H1 (cell line): ENCODE measurements at regions of chr10 and their contacts with region 1.

Region 1: GRCh38 chr10:11881477-11882417 is 58.6 kb downstream of the PROSER2 start:
- DNase-seq: peak in 1 of 2 experiments; percentile 65
- H3K4me3 ChIP-seq: no peak overlapping the region
- H3K27ac ChIP-seq: no peak overlapping the region
- H3K4me1 ChIP-seq: peaks cover 0 to 6% (median 0%) of the 10 kb centered on the region in 4 experiments; a peak in 1 of 7 replicates
- H3K27me3 ChIP-seq: no peaks in the 10 kb centered on the region
- CTCF ChIP-seq: peak; percentile 60 to 79 (median 76)
- EP300 ChIP-seq: no peak
- POLR2A ChIP-seq: no peak
- RAD21 ChIP-seq: peak; percentile 65 to 77

Region 2: GRCh38 chr10:11830836-11831519 is 50.8 kb before region 1 on chr10:
- CTCF ChIA-PET with region 1: interaction called, 11 read pairs
- POLR2A ChIA-PET with region 1: no interaction called
- DNase-seq: no peak
- H3K4me3 ChIP-seq: no peak overlapping the region
- H3K27ac ChIP-seq: no peak overlapping the region
- H3K4me1 ChIP-seq: peaks cover 2 to 9% (median 5%) of the 10 kb centered on the region in 4 experiments; a peak in 4 of 7 replicates
- H3K27me3 ChIP-seq: no peaks in the 10 kb centered on the region
- CTCF ChIP-seq: no peak
- EP300 ChIP-seq: no peak
- POLR2A ChIP-seq: no peak
- RAD21 ChIP-seq: no peak

Region 3: GRCh38 chr10:11869219-11869618 is 12.5 kb before region 1 on chr10:
- CTCF ChIA-PET with region 1: interaction called, 11 read pairs
- POLR2A ChIA-PET with region 1: interaction called, 4 read pairs
- DNase-seq: no peak
- H3K4me3 ChIP-seq: peak overlapping the region in 1 of 4 experiments; percentile 45; a peak in 1 of 8 replicates
- H3K27ac ChIP-seq: no peak overlapping the region
- H3K4me1 ChIP-seq: peaks cover 0 to 10% (median 3%) of the 10 kb centered on the region in 4 experiments; a peak in 5 of 7 replicates
- H3K27me3 ChIP-seq: no peaks in the 10 kb centered on the region
- CTCF ChIP-seq: no peak
- EP300 ChIP-seq: no peak
- POLR2A ChIP-seq: no peak
- RAD21 ChIP-seq: no peak

Region 4: GRCh38 chr10:11913074-11913641 is 31.4 kb after region 1 on chr10:
- CTCF ChIA-PET with region 1: interaction called, 15 read pairs
- POLR2A ChIA-PET with region 1: interaction called, 3 read pairs
- DNase-seq: no peak
- H3K4me3 ChIP-seq: no peak overlapping the region
- H3K27ac ChIP-seq: no peak overlapping the region
- H3K4me1 ChIP-seq: no peaks in the 10 kb centered on the region; a peak in 2 of 7 replicates
- H3K27me3 ChIP-seq: no peaks in the 10 kb centered on the region
- CTCF ChIP-seq: no peak
- EP300 ChIP-seq: no peak
- POLR2A ChIP-seq: no peak
- RAD21 ChIP-seq: no peak